ENCODE measurements at regions of chr1 and their contacts with region 1.

Region 1: DNA sequence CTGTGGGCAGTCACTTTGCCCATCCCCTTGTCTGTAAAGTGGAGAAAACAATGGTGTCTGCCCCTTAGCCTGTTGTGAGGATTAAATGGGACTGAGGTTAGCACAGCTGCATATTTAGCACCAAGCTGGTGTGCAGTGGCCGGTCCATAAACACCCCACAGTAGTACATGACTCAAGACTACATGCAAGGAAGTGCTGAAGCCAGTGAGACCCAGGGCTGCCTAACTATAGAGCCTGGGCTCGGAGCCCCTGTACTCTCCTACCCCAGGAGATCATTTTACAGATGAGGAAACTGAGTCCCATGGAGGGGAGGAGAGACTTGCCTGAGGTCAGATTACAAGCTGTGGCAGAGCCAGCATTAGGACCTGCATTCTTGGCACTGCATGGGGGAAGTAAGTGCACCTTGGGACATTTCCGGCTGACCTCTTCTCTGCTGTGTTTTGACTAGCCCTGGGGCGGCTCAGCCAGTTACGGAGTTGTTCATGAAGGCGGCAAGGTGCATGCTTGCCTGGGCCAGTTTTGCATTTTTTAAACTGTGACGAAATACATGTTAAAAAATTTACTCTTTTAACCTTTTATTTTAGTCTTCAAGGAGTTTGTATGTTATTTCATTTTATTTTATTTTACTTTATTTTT is 3.2 kb downstream of the SERINC2 start:
- DNase-seq: no peak
- H3K4me3 ChIP-seq: no peak overlapping the region
- H3K4me1 ChIP-seq: no peaks in the 10 kb centered on the region; the same call in 1 of the 2 replicates
- H3K27me3 ChIP-seq: no peaks in the 10 kb centered on the region

Region 2: GRCh38 chr1:31182352-31182751 is 233.9 kb before region 1 on chr1:
- in situ Hi-C with region 1: loop called (anchors 5 kb)
- DNase-seq: peak; percentile 55 to 88
- H3K4me3 ChIP-seq: no peak overlapping the region; the same call in 1 of the 2 replicates
- H3K4me1 ChIP-seq: no peaks in the 10 kb centered on the region; the same call in 1 of the 2 replicates
- H3K27me3 ChIP-seq: no peaks in the 10 kb centered on the region

Region 3: DNA sequence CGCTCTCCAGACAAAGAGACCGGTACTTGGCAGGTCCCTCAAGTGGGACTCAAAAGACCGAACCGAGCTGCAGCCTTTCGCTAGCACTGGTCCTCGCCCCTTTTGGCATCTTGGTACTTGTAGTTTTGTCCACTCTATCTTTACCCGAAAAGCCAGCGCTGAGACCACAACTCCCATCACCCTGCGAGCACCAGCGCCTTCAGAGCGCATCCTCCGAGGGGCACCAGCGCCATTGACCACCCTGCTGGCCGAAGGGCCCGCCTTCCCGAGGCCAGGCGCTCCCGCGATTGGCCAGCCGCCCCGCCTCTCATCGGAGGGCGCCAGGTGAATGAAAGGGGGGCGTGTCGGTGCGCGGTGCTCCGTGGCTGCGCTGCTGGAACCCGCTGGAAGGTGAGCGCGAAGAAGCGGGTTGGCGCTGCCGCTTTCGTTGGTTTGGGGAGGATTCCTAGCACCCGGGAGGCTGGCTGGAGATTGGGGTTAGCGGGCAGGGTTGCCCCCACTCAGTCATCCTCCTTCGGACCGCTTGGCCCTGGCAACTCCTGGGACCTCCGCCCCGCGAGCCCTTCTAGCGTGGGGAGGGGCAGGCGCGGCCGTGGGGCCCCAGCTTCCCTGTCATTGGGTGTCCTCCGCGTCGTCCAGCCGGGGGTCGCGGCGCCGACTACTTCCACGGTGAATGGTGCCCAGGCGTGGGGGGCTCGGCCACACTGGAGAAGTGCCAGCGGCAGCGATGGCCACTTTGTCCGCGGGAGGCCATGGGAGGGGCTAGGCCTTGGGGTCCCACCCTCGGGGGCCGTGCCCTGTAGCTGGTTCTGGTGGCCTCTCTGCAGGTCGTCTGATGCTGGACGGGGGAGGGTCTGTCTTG is 1048.7 kb after region 1 on chr1 and contains the start of gene ZBTB8B:
- in situ Hi-C with region 1: no loop called
- DNase-seq: peak; percentile 91 to 96
- H3K4me3 ChIP-seq: peak within 1 kb of the TSS; percentile 44
- H3K4me1 ChIP-seq: peaks cover 8% of the 10 kb centered on the region
- H3K27me3 ChIP-seq: peaks cover 2% of the 10 kb centered on the region; the same call in 1 of the 2 replicates